Activated naive CD4-positive, alpha-beta T cell treated with anti-CD3 and anti-CD28 coated beads for 36 hours (primary cell): ENCODE measurements at regions of chr2 and their contacts with region 1.

Region 1: GRCh38 chr2:192162392-192163042 is 32.2 kb downstream of the TMEFF2 start:
- DNase-seq: peak; percentile 83
- H3K4me3 Mint-ChIP-seq: no peak overlapping the region
- H3K27ac Mint-ChIP-seq: no peak overlapping the region
- H3K4me1 Mint-ChIP-seq: peaks cover 11% of the 10 kb centered on the region
- H3K27me3 Mint-ChIP-seq: peaks cover 9% of the 10 kb centered on the region

Region 2: GRCh38 chr2:191555092-191555742 is 607.3 kb before region 1 on chr2:
- CTCF ChIA-PET with region 1: interaction called, 69 read pairs
- intact Hi-C with region 1: loop called (anchors 1 kb)
- DNase-seq: peak; percentile 93
- H3K4me3 Mint-ChIP-seq: no peak overlapping the region
- H3K27ac Mint-ChIP-seq: no peak overlapping the region
- H3K4me1 Mint-ChIP-seq: peaks cover 2% of the 10 kb centered on the region
- H3K27me3 Mint-ChIP-seq: no peaks in the 10 kb centered on the region

Region 3: DNA sequence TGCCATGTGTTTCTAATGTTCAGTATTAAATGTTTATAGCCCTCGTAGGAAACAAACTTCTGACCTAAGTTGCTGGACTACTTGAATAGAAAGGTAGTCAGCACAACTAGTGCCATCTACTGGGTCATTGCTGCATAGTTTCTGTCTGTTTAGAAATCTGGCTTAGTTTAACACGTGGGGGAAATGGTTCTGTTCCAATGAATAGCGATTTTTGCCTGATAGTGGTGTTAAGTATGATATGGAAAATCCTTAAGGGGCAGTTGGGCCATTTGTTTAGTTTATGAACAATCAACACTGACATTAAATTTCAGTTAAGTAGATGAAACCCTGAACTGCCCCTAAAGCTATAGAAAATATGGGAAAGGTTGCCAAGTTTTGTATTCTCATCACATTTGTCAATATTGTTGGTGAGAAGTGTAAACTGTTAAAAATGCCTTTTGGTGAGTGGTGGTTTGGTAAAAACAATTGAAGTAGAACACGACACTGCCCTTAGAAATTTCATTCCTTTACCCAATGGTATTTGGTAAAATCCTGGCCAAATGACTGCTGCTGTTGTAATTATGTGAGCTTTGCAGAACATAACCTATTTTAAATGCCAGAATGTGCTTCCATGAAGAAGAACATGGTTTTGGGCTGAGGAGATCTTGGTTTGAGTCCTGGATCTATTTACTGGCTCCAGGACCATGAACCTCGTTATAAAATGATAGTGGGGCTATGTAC is 471.3 kb before region 1 on chr2:
- CTCF ChIA-PET with region 1: interaction called, 5 read pairs
- intact Hi-C with region 1: loop called (anchors 1 kb)
- DNase-seq: peak; percentile 73
- H3K4me3 Mint-ChIP-seq: no peak overlapping the region
- H3K27ac Mint-ChIP-seq: peak overlapping the region; percentile 72
- H3K4me1 Mint-ChIP-seq: peaks cover 66% of the 10 kb centered on the region
- H3K27me3 Mint-ChIP-seq: no peaks in the 10 kb centered on the region

Region 4: GRCh38 chr2:191758518-191759507 is 403.7 kb before region 1 on chr2:
- CTCF ChIA-PET with region 1: interaction called, 9 read pairs
- intact Hi-C with region 1: loop called (anchors 1 kb)
- DNase-seq: peak; percentile 68
- H3K4me3 Mint-ChIP-seq: no peak overlapping the region
- H3K27ac Mint-ChIP-seq: no peak overlapping the region
- H3K4me1 Mint-ChIP-seq: peaks cover 3% of the 10 kb centered on the region
- H3K27me3 Mint-ChIP-seq: peaks cover 9% of the 10 kb centered on the region

Region 5: GRCh38 chr2:191818133-191818532 is 344.4 kb before region 1 on chr2:
- CTCF ChIA-PET with region 1: interaction called, 50 read pairs
- intact Hi-C with region 1: no loop called
- DNase-seq: no peak
- H3K4me3 Mint-ChIP-seq: no peak overlapping the region
- H3K27ac Mint-ChIP-seq: no peak overlapping the region
- H3K4me1 Mint-ChIP-seq: no peaks in the 10 kb centered on the region
- H3K27me3 Mint-ChIP-seq: peaks cover 22% of the 10 kb centered on the region

Region 6: DNA sequence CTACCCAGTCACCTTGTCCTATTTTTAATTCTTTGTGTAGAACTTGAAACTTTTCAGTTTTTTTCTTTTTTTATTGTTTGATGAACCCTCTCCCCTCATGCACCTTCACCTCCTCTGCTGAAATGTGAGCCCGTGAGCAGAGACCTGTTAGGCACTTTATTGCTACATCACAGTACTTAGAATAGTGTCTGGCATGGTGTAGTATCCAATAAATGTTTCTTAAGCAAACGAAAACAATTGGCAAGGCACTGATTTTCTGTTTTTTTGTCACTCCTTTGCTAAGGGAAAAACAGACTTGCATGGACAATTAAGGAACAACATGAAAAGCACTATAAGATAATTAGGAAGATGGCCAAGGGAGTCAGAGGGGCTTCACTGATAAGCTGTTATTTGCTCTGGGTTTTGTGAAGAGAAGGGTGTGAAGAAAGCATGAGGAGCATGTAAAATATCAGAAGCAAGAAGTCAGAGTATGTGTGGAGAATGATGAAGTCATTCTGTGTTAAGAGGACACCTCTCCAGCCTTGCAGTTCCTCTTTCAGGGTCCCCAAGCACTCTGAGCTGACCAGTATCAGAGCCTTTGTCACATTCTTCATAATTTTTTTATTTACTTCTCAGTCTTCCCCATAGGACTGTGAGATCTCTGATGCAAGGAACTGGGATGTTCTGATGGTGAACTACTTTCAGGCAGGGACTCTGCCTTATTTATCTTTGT is 215.9 kb before region 1 on chr2:
- CTCF ChIA-PET with region 1: interaction called, 8 read pairs
- intact Hi-C with region 1: loop called (anchors 1 kb)
- DNase-seq: no peak
- H3K4me3 Mint-ChIP-seq: no peak overlapping the region
- H3K27ac Mint-ChIP-seq: no peak overlapping the region
- H3K4me1 Mint-ChIP-seq: no peaks in the 10 kb centered on the region
- H3K27me3 Mint-ChIP-seq: peaks cover 3% of the 10 kb centered on the region